GM12878 (cell line): ENCODE measurements at regions of chr7 and their contacts with region 1.

Region 1: GRCh38 chr7:82131215-82131614 is 312.4 kb downstream of the CACNA2D1 start:
- DNase-seq: no peak
- ATAC-seq: peak; percentile 32; the same call in 2 of the 3 replicates
- H3K4me3 ChIP-seq: no peak overlapping the region
- H3K27ac ChIP-seq: no peak overlapping the region
- H3K4me1 ChIP-seq: no peaks in the 10 kb centered on the region
- H3K27me3 ChIP-seq: no peaks in the 10 kb centered on the region
- CTCF ChIP-seq: no peak
- EP300 ChIP-seq: no peak
- POLR2A ChIP-seq: no peak
- RAD21 ChIP-seq: no peak

Region 2: DNA sequence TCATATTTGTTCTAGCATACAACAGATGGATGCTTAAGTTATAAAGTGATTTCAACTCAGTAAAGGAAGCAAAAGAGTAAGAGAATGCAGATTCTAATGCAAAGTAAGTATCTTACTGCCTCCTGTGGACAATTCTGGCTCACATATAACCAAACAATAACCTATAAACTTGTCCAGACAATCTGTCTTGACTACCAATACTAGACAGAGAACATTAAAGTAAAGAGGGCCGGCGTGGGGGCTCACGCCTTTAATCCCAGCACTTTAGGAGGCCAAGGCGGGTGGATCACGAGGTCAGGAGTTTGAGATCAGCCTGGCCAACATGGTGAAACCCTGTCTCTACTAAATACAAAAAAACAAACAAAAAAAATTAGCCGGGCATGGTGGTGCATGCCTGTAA is 17.0 kb before region 1 on chr7:
- CTCF ChIA-PET with region 1: interaction called, 4 read pairs
- POLR2A ChIA-PET with region 1: no interaction called
- RAD21 ChIA-PET with region 1: interaction called, 6 read pairs
- SMC1A ChIA-PET with region 1: interaction called, 11 read pairs
- in situ Hi-C with region 1: no loop called
- intact Hi-C with region 1: no loop called
- DNase-seq: no peak
- ATAC-seq: peak; percentile 54
- H3K4me3 ChIP-seq: no peak overlapping the region
- H3K27ac ChIP-seq: no peak overlapping the region
- H3K4me1 ChIP-seq: no peaks in the 10 kb centered on the region
- H3K27me3 ChIP-seq: no peaks in the 10 kb centered on the region
- CTCF ChIP-seq: no peak; a peak in 1 of 6 replicates
- EP300 ChIP-seq: no peak
- POLR2A ChIP-seq: no peak
- RAD21 ChIP-seq: no peak